BJ (cell line): ENCODE measurements at regions of chr1 and their contacts with region 1.

Region 1: GRCh38 chr1:95119273-95119672 is 2.1 kb downstream of the TLCD4 start:
- DNase-seq: no peak
- H3K4me3 ChIP-seq: no peak overlapping the region
- H3K27me3 ChIP-seq: peaks cover 8% of the 10 kb centered on the region
- CTCF ChIP-seq: no peak

Region 2: GRCh38 chr1:95139039-95139438 is 19.8 kb after region 1 on chr1:
- CTCF ChIA-PET with region 1: no interaction called
- POLR2A ChIA-PET with region 1: no interaction called
- DNase-seq: no peak
- H3K4me3 ChIP-seq: no peak overlapping the region
- H3K27me3 ChIP-seq: no peaks in the 10 kb centered on the region
- CTCF ChIP-seq: no peak

Region 3: DNA sequence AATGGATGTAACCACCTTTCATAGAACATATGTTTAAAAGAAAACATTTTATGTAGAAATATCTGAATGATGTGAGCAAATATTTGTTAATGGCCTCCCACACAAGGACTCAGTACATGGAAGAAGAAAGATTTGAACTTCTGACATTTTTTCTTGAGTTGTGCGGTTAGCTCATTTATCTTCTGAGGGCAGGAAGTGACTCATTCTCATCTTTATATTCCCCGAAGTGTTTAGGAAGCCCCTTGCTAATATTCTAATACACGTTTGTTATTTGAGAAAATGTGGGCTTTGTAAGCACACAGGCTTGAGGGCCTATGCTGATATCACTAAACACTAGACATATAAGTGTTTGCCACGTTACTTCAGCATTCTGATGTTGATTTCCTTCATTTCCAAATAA is 1209.8 kb after region 1 on chr1:
- CTCF ChIA-PET with region 1: no interaction called
- POLR2A ChIA-PET with region 1: interaction called, 23 read pairs
- DNase-seq: no peak
- H3K4me3 ChIP-seq: no peak overlapping the region
- H3K27me3 ChIP-seq: no peaks in the 10 kb centered on the region
- CTCF ChIP-seq: no peak